Left ventricle myocardium superior (tissue), 1 donor: ENCODE measurements at regions of chr11 and their contacts with region 1.

Region 1: DNA sequence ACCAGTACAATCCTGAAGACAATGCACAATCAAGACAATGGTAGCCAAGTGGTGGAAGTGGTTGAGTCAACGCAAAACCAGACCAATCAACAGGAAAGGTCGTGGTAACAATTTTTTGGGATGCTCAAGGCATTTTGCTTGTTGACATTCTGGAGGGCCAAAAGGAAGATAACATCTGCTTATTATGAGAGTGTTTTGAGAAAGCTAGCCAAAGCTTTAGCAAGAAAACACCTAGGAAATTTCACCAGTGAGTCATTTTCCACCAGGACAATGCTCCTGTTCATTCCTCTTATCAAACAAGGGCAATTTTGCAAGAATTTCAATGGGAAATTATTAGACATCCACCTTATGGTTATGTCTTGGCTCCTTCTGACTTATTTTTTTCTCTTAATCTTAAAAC is 1932.2 kb upstream of the RAG2 start:
- DNase-seq: no peak
- ATAC-seq: no peak

Region 2: GRCh38 chr11:38100836-38101462 is 429.3 kb before region 1 on chr11:
- intact Hi-C with region 1: loop called (anchors 10 kb)
- DNase-seq: no peak
- ATAC-seq: no peak

Region 3: GRCh38 chr11:38163526-38163925 is 366.7 kb before region 1 on chr11:
- intact Hi-C with region 1: no loop called
- DNase-seq: no peak
- ATAC-seq: no peak

Region 4: GRCh38 chr11:39036021-39036420 is 505.8 kb after region 1 on chr11:
- intact Hi-C with region 1: no loop called
- DNase-seq: no peak
- ATAC-seq: no peak